A549 (cell line): ENCODE measurements at regions of chr15 and their contacts with region 1.

Region 1: DNA sequence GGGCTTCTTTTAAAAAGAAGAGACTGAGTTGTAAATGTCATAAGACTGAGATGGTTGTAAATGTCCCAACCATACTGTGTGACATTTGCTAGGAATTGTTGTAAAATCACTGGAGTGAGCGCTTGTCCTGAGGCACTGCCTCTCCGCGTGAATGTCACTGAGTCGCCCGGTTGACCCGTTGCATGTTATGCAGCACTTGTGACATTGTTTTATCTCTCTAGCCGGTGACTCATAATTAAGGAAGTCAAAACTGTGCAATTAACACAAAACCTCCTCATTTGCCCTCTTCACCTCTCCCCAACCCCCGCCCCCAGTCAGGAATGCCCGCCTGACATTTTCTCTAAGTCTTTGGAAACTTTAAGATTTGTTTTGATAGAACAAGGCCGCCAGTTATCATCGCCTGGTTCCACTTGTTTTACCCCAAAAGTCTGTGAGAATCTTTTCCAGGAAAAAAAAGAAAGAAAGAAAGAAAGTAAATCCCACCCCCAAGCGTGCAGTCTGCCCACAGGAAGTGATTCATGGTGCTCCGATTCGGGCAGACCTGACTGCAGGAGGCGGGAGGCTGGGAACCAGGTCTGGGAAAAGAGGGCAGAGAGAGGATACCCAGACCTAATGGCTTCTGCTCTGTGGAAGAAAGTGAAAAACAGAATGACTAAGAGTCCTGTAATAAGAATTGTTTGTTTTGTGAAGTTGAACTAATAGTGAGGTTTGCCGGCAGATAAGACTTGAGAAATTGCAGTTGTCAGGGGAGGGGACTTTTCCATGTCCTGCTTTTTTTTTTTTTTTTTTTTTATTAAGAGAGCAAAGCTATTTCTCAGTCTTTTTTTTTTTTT is 84.8 kb downstream of the SMAD3 start:
- DNase-seq: peak; percentile 97 to 98
- ATAC-seq: peak; percentile 81 to 83
- H3K4me3 ChIP-seq: peak overlapping the region; percentile 24; the same call in 2 of the 3 replicates
- H3K27ac ChIP-seq: peak overlapping the region; percentile 92
- H3K4me1 ChIP-seq: peaks cover 96% of the 10 kb centered on the region
- CTCF ChIP-seq: no peak
- EP300 ChIP-seq: peak; percentile 88 to 93; a peak in 3 of 5 replicates
- POLR2A ChIP-seq: no peak
- RAD21 ChIP-seq: peak; percentile 24 to 52; a peak in 4 of 5 replicates

Region 2: DNA sequence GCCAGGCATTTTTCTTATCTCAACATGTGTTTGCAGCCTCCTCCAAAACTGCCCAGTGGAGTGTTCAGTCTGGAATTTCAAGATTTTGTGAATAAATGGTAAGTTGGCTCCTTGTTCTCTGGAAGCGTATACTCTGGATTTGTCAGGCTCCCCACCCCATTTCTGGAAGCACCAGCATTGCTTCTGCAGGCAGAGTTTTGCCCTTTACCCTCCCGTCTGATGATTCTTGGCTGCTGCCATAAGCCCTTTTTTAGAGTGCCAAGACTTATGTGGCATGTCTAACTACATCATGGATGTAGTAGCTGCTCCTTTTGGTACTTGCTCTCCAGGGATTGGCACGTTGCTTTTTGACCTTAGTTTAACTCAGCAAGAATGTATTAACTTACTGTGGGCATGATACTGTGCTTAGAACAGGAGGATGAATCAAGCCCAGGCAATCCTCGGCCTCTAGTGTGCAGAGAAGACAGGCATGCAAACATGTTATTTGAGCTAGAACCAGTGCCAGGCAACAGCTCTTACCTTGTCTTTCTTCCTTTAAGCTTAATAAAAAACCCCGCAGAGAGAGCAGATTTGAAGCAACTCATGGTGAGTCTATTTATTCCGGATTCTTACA is 661.0 kb before region 1 on chr15:
- CTCF ChIA-PET with region 1: no interaction called
- POLR2A ChIA-PET with region 1: no interaction called
- DNase-seq: no peak
- ATAC-seq: peak; percentile 5 to 9; a peak in 2 of 6 replicates
- H3K4me3 ChIP-seq: no peak overlapping the region
- H3K27ac ChIP-seq: no peak overlapping the region
- H3K4me1 ChIP-seq: no peaks in the 10 kb centered on the region
- CTCF ChIP-seq: no peak
- EP300 ChIP-seq: no peak
- POLR2A ChIP-seq: no peak
- RAD21 ChIP-seq: no peak

Region 3: GRCh38 chr15:67120839-67121643 is 29.2 kb before region 1 on chr15:
- CTCF ChIA-PET with region 1: interaction called, 67 read pairs
- POLR2A ChIA-PET with region 1: interaction called, 13 read pairs
- DNase-seq: peak; percentile 87 to 90
- ATAC-seq: peak; percentile 6 to 24; a peak in 4 of 6 replicates
- H3K4me3 ChIP-seq: peak overlapping the region; percentile 2; the same call in 1 of the 3 replicates
- H3K27ac ChIP-seq: peak overlapping the region; percentile 86 to 92
- H3K4me1 ChIP-seq: peaks cover 97% of the 10 kb centered on the region
- CTCF ChIP-seq: no peak
- EP300 ChIP-seq: peak; percentile 80 to 94; a peak in 3 of 5 replicates
- POLR2A ChIP-seq: no peak
- RAD21 ChIP-seq: peak; percentile 2 to 27; a peak in 2 of 5 replicates

Region 4: GRCh38 chr15:67127965-67128364 is 22.3 kb before region 1 on chr15:
- CTCF ChIA-PET with region 1: interaction called, 67 read pairs
- POLR2A ChIA-PET with region 1: interaction called, 13 read pairs
- DNase-seq: peak; percentile 82 to 91
- ATAC-seq: peak; percentile 19 to 41
- H3K4me3 ChIP-seq: no peak overlapping the region
- H3K27ac ChIP-seq: peak overlapping the region; percentile 86 to 92
- H3K4me1 ChIP-seq: peaks cover 97% of the 10 kb centered on the region
- CTCF ChIP-seq: no peak
- EP300 ChIP-seq: peak; percentile 41 to 61; a peak in 2 of 5 replicates
- POLR2A ChIP-seq: no peak
- RAD21 ChIP-seq: peak; percentile 29 to 42; a peak in 3 of 5 replicates

Region 5: DNA sequence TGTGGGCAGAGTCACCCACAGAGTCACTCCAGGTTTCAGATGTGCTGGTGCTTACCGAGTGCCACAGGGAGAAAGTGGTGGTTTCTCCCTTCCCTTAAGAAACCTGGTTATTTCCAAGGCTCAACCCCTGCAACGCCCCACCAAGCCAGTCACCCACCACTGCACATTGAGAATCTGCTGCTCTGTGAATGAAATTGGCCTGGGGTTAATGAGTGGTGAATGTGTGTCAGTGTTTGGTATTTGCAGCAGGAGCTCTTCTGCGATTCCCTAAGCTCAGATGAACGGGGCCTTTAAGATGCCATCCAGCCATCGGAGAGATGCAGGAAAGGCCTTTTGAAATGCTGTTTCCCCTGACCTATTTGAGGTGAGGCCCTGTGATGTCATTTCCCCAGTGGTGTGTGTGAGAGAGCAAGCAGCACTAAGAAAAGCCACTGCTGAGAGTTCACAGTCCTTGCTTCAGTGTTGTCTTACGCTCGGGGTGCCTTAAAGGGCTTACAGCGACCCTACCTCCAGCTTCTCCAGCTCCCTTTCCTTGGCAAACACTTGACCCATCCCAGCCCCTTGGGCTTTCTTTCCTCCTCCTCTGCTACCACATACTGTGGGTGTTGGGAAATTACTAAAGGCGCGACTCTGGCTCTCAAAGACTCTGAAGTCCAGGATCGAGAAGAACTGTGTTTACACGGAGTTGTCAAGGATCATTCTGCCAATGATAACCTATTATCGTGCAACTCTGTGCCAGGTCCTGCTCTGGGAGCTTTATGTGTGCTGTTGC is 16.0 kb before region 1 on chr15:
- CTCF ChIA-PET with region 1: interaction called, 19 read pairs
- POLR2A ChIA-PET with region 1: interaction called, 3 read pairs
- DNase-seq: peak; percentile 47 to 90
- ATAC-seq: peak; percentile 57 to 65
- H3K4me3 ChIP-seq: peak overlapping the region; percentile 12; the same call in 1 of the 3 replicates
- H3K27ac ChIP-seq: peak overlapping the region; percentile 92
- H3K4me1 ChIP-seq: peaks cover 100% of the 10 kb centered on the region
- CTCF ChIP-seq: no peak
- EP300 ChIP-seq: no peak
- POLR2A ChIP-seq: no peak
- RAD21 ChIP-seq: no peak

Region 6: GRCh38 chr15:67178569-67179210 is 28.4 kb after region 1 on chr15:
- CTCF ChIA-PET with region 1: interaction called, 14 read pairs
- POLR2A ChIA-PET with region 1: interaction called, 3 read pairs
- DNase-seq: peak in 1 of 2 experiments; percentile 69
- ATAC-seq: peak; percentile 20 to 43; a peak in 4 of 6 replicates
- H3K4me3 ChIP-seq: no peak overlapping the region
- H3K27ac ChIP-seq: peak overlapping the region; percentile 13 to 84; a peak in 4 of 6 replicates
- H3K4me1 ChIP-seq: peaks cover 79% of the 10 kb centered on the region
- CTCF ChIP-seq: no peak
- EP300 ChIP-seq: no peak
- POLR2A ChIP-seq: no peak
- RAD21 ChIP-seq: no peak

Region 7: DNA sequence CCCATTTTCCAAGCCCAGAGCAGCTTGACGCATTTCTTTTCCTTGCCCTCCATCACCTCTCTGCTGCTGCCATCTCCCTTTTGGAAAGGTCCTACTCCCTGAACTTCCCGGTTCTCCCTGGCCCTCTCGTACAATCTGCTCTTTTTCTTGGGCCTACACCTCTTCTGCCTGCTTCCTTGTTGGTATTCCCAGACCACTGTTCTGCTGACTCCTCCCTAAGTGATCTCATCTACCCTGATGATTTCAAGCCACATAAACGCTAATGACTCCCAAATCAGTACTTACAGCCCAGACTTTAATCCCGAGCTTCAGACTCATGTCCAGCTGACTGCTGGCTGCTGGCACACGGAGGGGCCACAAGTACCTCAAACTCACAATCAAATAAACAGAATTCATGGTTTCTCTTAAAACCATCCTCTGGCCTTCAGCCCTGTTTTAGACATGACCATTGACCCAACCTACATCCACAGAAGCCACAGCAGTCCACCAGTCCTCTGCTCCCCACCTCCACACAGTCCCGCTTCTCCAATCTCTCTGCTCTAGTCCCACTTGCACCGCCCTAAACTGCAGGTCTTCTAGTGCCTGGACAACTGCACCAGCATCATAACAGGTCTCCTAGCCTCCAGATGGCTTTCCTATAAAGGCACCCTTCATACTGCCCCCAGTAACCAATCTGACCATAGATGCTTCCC is 46.6 kb after region 1 on chr15:
- CTCF ChIA-PET with region 1: no interaction called
- POLR2A ChIA-PET with region 1: no interaction called
- DNase-seq: peak in 1 of 2 experiments; percentile 64
- ATAC-seq: peak; percentile 12 to 45; a peak in 4 of 6 replicates
- H3K4me3 ChIP-seq: no peak overlapping the region
- H3K27ac ChIP-seq: peak overlapping the region in 1 of 2 experiments; percentile 65; a peak in 3 of 6 replicates
- H3K4me1 ChIP-seq: peaks cover 29% of the 10 kb centered on the region
- CTCF ChIP-seq: no peak
- EP300 ChIP-seq: no peak
- POLR2A ChIP-seq: no peak
- RAD21 ChIP-seq: no peak

Region 8: DNA sequence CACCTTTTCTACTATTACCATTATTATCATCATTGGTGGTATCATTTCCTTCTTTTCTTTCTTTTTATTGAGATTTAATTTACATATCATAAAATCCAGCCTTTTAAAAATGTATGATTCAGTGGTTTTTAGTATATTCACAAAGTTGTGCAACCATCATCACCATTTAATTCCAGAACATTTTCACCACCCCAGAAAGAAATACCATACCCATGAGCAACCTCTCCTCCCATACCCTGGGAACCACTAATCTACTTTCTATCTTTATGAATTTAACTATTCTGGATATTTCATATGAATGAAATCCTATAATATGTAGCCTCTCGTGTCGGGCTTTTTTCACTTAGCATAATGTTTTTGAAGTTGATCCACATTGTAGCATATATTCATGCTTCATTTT is 75.1 kb after region 1 on chr15:
- CTCF ChIA-PET with region 1: no interaction called
- POLR2A ChIA-PET with region 1: no interaction called
- DNase-seq: no peak
- ATAC-seq: no peak
- H3K4me3 ChIP-seq: no peak overlapping the region
- H3K27ac ChIP-seq: no peak overlapping the region
- H3K4me1 ChIP-seq: no peaks in the 10 kb centered on the region
- CTCF ChIP-seq: no peak
- EP300 ChIP-seq: no peak
- POLR2A ChIP-seq: no peak
- RAD21 ChIP-seq: no peak

Region 9: GRCh38 chr15:67349634-67350033 is 199.4 kb after region 1 on chr15:
- CTCF ChIA-PET with region 1: no interaction called
- POLR2A ChIA-PET with region 1: no interaction called
- DNase-seq: no peak
- ATAC-seq: no peak
- H3K4me3 ChIP-seq: no peak overlapping the region
- H3K27ac ChIP-seq: no peak overlapping the region
- H3K4me1 ChIP-seq: no peaks in the 10 kb centered on the region
- CTCF ChIP-seq: no peak
- EP300 ChIP-seq: no peak
- POLR2A ChIP-seq: no peak
- RAD21 ChIP-seq: no peak